ENCODE measurements at regions of chr15 and their contacts with region 1.

Region 1: DNA sequence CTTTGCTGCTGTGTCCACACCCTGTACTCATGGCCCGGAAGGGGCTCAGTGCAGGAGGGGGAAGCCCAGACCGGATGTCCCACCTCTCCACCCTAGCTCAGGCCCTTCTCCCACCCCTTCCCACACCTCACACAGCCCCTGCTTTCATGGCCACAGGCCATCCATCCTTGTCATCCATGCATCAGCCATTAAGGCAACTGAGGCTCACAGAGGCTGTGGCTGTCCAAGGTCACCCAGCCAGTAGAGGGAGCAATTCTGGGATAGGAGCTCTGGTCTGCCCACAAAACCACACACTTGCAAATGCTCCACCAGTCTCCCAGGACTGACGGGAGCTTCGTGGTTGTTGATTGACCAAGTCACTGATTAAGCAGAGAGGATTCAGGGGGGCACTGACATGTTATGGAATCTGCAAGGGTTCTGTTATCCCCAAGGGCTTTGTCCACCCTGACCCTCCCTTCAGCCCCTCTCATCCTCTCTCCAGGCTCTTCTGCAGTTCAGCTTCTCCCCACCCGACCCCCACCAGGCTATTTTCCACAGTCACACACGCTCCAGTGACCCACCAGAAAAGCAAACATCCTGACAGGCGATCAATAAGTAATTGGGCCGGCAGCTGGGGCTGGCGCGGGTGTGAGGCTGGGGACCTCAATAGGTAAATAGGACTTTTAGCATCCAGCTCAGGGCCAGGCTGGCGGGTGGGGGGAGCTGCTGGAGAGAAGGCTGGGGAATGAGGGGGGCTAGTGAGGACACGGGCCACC is 15.1 kb downstream of the LINGO1 start:
- DNase-seq: no peak
- H3K4me3 ChIP-seq: no peak overlapping the region
- H3K27ac ChIP-seq: no peak overlapping the region
- H3K4me1 ChIP-seq: peaks cover 0 to 13% of the 10 kb centered on the region in 2 experiments; a peak in 1 of 4 replicates
- H3K27me3 ChIP-seq: no peaks in the 10 kb centered on the region
- CTCF ChIP-seq: peak; percentile 47
- EP300 ChIP-seq: no peak
- RAD21 ChIP-seq: no peak

Region 2: DNA sequence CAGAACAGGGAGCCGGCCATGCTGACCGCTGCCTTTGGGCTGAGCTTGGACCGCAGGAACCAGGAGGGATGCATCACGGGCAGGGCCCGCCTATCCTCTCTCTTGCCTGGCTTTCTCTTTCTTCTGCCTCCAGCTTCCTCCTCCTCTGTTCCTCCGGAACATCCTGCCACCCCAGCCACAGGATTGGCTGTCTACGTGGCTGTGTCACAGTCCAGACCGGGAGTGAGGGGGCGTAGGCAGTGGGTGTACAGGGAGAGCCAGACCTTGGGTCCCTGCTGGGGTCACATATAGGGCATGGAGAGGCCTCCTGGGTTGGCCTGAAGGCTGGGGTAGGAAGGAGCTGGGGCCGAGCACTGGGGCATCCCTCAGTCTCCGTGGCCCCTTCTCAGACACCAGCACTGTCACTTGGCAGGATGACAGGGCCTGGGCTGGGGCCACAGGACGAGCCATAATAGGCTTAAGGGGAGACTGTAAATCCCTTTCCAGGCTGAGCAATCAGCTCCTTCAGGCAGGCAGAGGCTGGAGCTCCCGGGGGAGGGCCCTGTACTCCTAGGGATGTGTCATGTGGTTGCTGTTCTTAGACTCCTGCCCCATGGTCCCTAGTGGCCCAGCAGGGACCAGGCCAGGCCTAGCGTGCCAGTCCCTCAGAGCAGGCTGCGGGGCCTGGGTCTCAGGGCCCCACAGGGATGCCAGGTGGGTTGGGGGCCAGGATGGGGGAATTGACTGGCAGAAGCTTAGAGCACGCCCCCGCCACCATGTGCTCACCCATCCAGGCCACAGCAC is 10.4 kb before region 1 on chr15:
- CTCF ChIA-PET with region 1: interaction called, 12 read pairs
- POLR2A ChIA-PET with region 1: no interaction called
- DNase-seq: no peak
- H3K4me3 ChIP-seq: no peak overlapping the region
- H3K27ac ChIP-seq: peak overlapping the region in 1 of 2 experiments; percentile 58; a peak in 1 of 4 replicates
- H3K4me1 ChIP-seq: peaks cover 11 to 61% of the 10 kb centered on the region in 2 experiments; a peak in 2 of 4 replicates
- H3K27me3 ChIP-seq: no peaks in the 10 kb centered on the region
- CTCF ChIP-seq: no peak
- EP300 ChIP-seq: no peak
- RAD21 ChIP-seq: no peak

Region 3: DNA sequence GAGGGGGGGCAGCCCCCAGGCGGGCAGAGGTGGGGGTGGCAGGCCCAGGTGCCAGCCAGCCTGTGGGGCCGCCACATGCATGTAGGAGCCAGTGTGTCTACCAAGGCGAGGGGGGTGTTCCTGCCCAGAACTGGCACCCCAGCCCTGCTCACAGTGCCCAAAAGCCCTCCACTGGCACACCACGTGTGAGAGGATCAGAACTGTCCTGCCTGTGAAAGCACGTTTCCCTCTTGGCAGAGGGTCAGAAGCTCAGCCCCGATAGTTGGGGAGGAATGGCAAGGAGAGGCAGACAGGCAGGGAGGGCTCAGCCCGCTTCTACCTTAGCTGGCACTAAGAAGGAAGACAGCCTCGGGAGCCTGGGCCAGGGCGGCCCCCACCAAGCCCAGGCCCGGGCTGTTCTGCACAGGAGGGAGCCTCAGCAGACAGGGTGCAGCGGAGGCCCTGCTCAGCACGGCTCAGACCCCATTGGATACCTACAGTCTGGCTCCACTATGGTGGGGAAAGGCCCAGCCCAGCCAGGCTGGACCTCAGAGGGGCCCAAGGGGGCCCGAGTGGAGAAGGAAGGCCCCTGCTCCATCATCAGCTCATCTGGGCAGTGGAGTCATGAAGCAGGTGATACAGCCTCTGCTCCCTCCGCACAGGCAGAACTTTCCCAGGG is 99.8 kb after region 1 on chr15:
- CTCF ChIA-PET with region 1: no interaction called
- POLR2A ChIA-PET with region 1: no interaction called
- DNase-seq: peak; percentile 65
- H3K4me3 ChIP-seq: no peak overlapping the region
- H3K27ac ChIP-seq: no peak overlapping the region
- H3K4me1 ChIP-seq: peaks cover 0 to 8% of the 10 kb centered on the region in 2 experiments; a peak in 2 of 4 replicates
- H3K27me3 ChIP-seq: peaks cover 3% of the 10 kb centered on the region; the same call in 1 of the 2 replicates
- CTCF ChIP-seq: no peak
- EP300 ChIP-seq: no peak
- RAD21 ChIP-seq: no peak

Measured in SK-N-SH (cell line).